ENCODE measurements at regions of chr10 and their contacts with region 1.

Region 1: GRCh38 chr10:3467052-3467951 is 294.7 kb upstream of the PITRM1 start:
- DNase-seq: peak; percentile 99
- H3K4me3 ChIP-seq: peak overlapping the region in 1 of 3 experiments; percentile 45
- H3K27ac ChIP-seq: peak overlapping the region; percentile 100
- H3K4me1 ChIP-seq: peaks cover 44% of the 10 kb centered on the region
- H3K27me3 ChIP-seq: no peaks in the 10 kb centered on the region
- CTCF ChIP-seq: peak; percentile 63 to 71
- POLR2A ChIP-seq: peak; percentile 18

Region 2: DNA sequence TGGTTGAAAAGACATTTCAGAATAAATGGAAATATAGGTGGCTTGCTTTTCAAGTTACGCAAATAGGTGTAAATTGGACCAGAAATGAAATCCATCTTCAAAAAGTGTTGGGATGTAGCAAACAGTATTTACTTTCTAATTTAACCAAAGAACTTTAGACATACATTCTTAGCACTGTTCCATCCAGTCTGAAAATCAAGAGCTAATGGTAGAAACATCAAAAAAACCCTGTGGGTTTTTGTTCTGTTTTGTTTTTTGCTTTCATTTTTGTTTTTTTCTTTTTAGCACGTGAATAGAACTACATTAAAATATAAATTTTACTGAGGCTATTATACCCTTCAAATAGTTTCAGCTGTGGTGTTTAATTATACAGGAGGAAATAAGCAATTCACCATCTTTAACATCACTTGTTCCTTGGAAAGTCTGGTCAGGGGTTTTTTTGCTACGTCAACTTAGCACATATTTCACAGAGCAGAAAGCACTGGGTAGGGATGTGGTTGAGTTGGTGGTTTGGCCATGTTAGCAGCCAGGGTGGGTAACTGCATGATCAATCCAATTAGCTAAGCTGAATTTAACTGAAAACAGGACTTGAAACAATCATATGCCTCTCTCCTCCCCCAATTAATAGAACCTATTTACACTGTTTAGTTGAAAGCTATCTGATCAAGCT is 675.4 kb before region 1 on chr10:
- CTCF ChIA-PET with region 1: no interaction called
- POLR2A ChIA-PET with region 1: no interaction called
- dilution Hi-C with region 1: no loop called
- intact Hi-C with region 1: no loop called
- DNase-seq: no peak
- H3K4me3 ChIP-seq: no peak overlapping the region
- H3K27ac ChIP-seq: no peak overlapping the region
- H3K4me1 ChIP-seq: no peaks in the 10 kb centered on the region
- H3K27me3 ChIP-seq: no peaks in the 10 kb centered on the region
- CTCF ChIP-seq: no peak
- POLR2A ChIP-seq: no peak

Region 3: DNA sequence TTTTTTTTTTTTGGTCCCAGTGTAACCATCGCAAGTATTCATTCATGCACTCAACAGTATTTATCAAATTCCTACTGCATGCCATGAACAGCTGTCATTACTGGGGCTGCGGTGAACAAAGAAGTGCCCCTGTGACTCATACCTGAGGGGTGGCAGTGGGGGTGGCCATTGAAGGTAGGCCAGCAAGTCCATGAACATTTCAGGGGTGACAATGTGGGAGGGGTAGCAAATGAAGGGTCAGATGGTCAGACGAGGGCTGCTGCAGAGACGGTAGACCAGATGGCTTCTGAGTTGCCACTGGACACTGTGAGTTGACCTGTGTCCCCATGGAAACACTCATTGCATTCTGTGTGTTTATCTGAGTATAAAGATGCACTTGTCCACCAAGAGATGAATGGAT is 202.2 kb before region 1 on chr10:
- CTCF ChIA-PET with region 1: interaction called, 3 read pairs
- POLR2A ChIA-PET with region 1: no interaction called
- dilution Hi-C with region 1: no loop called
- intact Hi-C with region 1: loop called (anchors 1 kb)
- DNase-seq: peak; percentile 26
- H3K4me3 ChIP-seq: no peak overlapping the region
- H3K27ac ChIP-seq: peak overlapping the region; percentile 82
- H3K4me1 ChIP-seq: peaks cover 39% of the 10 kb centered on the region
- H3K27me3 ChIP-seq: no peaks in the 10 kb centered on the region
- CTCF ChIP-seq: no peak
- POLR2A ChIP-seq: no peak

Region 4: GRCh38 chr10:3452173-3452626 is 15.1 kb before region 1 on chr10:
- CTCF ChIA-PET with region 1: interaction called, 9 read pairs
- POLR2A ChIA-PET with region 1: no interaction called
- dilution Hi-C with region 1: no loop called
- intact Hi-C with region 1: loop called (anchors 1 kb)
- DNase-seq: peak; percentile 85
- H3K4me3 ChIP-seq: no peak overlapping the region
- H3K27ac ChIP-seq: peak overlapping the region; percentile 98
- H3K4me1 ChIP-seq: peaks cover 43% of the 10 kb centered on the region
- H3K27me3 ChIP-seq: no peaks in the 10 kb centered on the region
- CTCF ChIP-seq: peak; percentile 30 to 40
- POLR2A ChIP-seq: no peak

Region 5: GRCh38 chr10:3785257-3785850 is 318.1 kb after region 1 on chr10:
- CTCF ChIA-PET with region 1: no interaction called
- POLR2A ChIA-PET with region 1: interaction called, 4 read pairs
- dilution Hi-C with region 1: no loop called
- intact Hi-C with region 1: loop called (anchors 2 kb)
- DNase-seq: peak; percentile 98
- H3K4me3 ChIP-seq: peak overlapping the region; percentile 22 to 95 (median 44)
- H3K27ac ChIP-seq: peak overlapping the region; percentile 98
- H3K4me1 ChIP-seq: peaks cover 26% of the 10 kb centered on the region
- H3K27me3 ChIP-seq: no peaks in the 10 kb centered on the region
- CTCF ChIP-seq: no peak
- POLR2A ChIP-seq: peak; percentile 99

Region 6: DNA sequence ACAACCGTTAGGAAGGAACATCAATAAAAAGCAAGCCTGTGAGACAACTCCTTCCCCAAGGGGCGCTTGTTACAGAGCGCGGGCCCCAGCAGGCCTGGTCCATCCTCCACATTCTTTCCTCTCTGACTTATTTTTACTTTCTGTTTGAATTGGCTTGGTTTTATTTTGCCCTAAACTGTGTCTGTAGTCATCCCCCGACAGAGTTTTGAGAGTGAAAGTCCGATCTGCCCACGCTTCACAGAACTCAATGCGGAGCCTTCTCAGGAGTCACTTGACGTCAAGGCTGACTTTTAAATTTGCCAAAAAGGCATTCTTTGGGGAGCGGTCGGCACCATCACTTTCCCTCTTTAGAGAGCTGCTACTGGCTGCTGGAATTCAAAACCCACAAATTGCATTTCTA is 467.8 kb after region 1 on chr10:
- CTCF ChIA-PET with region 1: no interaction called
- POLR2A ChIA-PET with region 1: no interaction called
- dilution Hi-C with region 1: no loop called
- intact Hi-C with region 1: loop called (anchors 5 kb)
- DNase-seq: peak; percentile 26
- H3K4me3 ChIP-seq: no peak overlapping the region
- H3K27ac ChIP-seq: peak overlapping the region; percentile 75
- H3K4me1 ChIP-seq: peaks cover 24% of the 10 kb centered on the region
- H3K27me3 ChIP-seq: no peaks in the 10 kb centered on the region
- CTCF ChIP-seq: no peak
- POLR2A ChIP-seq: no peak

Region 7: GRCh38 chr10:4678023-4678950 is 1211.0 kb after region 1 on chr10:
- CTCF ChIA-PET with region 1: no interaction called
- POLR2A ChIA-PET with region 1: no interaction called
- dilution Hi-C with region 1: no loop called
- intact Hi-C with region 1: loop called (anchors 5 kb)
- DNase-seq: peak; percentile 94
- H3K4me3 ChIP-seq: peak overlapping the region; percentile 32 to 99 (median 71)
- H3K27ac ChIP-seq: peak overlapping the region; percentile 84
- H3K4me1 ChIP-seq: peaks cover 31% of the 10 kb centered on the region
- H3K27me3 ChIP-seq: no peaks in the 10 kb centered on the region
- CTCF ChIP-seq: no peak
- POLR2A ChIP-seq: no peak